Heart left ventricle (tissue), 16 donors: ENCODE measurements at regions of chr7 and their contacts with region 1.

Region 1: DNA sequence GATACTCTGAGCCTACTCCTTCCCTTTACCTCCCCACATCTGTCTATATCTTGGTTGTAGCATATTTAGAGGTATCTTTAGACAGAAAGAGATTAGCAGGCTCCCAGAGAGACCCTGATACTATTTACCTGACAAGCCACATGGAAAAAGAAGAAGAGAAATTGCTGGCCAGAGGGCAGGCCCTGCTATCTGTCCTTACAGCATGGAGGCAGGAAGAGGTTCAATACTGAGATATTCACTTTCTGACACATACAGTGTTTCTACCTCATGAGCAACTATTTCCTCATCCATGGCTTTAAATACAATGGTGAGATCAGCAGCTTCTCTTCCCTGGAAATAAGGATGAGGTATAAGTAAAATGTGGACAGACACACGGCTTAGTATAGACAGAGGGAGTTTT is 33.9 kb upstream of the TSPAN13 start:
- DNase-seq: no peak
- ATAC-seq: no peak
- H3K4me3 ChIP-seq: no peak overlapping the region
- H3K27ac ChIP-seq: no peak overlapping the region
- H3K4me1 ChIP-seq: no peaks in the 10 kb centered on the region
- H3K27me3 ChIP-seq: no peaks in the 10 kb centered on the region
- CTCF ChIP-seq: no peak
- POLR2A ChIP-seq: no peak

Region 2: DNA sequence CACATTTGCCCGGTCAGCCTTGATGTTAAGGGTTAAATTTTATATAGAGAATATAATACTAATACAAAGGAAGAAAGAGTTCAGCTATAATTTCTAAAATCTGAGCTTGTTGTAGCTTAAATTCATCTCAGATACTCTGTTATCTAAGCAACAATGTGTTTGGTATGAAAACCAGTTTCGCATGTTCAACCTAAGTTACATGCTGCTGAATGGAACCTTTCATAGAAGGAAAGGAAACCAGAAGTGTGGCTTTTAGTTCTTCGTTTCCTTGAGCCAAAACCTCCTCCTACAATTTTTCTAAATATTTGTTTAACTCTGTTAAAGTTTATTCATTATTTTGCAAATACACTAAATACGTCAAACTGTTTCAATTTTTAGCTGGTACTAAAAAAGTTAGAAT is 66.6 kb after region 1 on chr7:
- intact Hi-C with region 1: no loop called
- DNase-seq: no peak
- ATAC-seq: no peak
- H3K4me3 ChIP-seq: no peak overlapping the region
- H3K27ac ChIP-seq: no peak overlapping the region
- H3K4me1 ChIP-seq: no peaks in the 10 kb centered on the region
- H3K27me3 ChIP-seq: no peaks in the 10 kb centered on the region
- CTCF ChIP-seq: no peak
- POLR2A ChIP-seq: no peak

Region 3: GRCh38 chr7:17152721-17153120 is 433.0 kb after region 1 on chr7:
- intact Hi-C with region 1: loop called in 1 of 10 experiments (anchors 10 kb)
- DNase-seq: peak in 1 of 5 donors; percentile 26
- ATAC-seq: peak in 1 of 4 donors; percentile 49
- H3K4me3 ChIP-seq: no peak overlapping the region
- H3K27ac ChIP-seq: peak overlapping the region in 1 of 12 donors; percentile 38
- H3K4me1 ChIP-seq: peaks cover 0 to 31% (median 0%) of the 10 kb centered on the region in 12 donors
- H3K27me3 ChIP-seq: no peaks in the 10 kb centered on the region
- CTCF ChIP-seq: no peak
- POLR2A ChIP-seq: no peak